CD4-positive, alpha-beta memory T cell (primary cell): ENCODE measurements at regions of chr13 and their contacts with region 1.

Region 1: DNA sequence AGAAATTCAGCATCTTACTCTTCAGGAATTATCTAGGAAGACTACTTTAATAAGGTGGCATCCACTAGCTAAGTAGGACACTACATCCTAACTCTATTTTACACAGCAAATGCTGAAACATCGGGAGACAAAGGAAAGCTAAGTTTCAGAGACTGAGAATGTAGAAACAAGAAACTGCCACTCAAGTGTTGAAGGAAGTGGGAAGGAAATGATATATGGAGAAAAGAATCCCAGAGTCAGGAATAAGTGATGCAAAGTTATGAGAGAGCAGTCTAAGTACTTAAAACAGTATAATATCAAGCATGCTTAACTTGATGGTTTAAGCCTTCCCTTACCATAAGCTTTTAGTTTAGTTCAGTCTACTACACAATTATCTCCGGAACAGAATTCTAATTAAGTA is 52.4 kb downstream of the RBM26 start:
- DNase-seq: no peak
- H3K4me3 ChIP-seq: no peak overlapping the region
- H3K4me3 Mint-ChIP-seq: no peak overlapping the region
- H3K27ac ChIP-seq: no peak overlapping the region
- H3K27ac Mint-ChIP-seq: peak overlapping the region in 2 of 7 donors; percentile 0 to 48
- H3K4me1 ChIP-seq: no peaks in the 10 kb centered on the region
- H3K4me1 Mint-ChIP-seq: peaks cover 5 to 14% (median 11%) of the 10 kb centered on the region in 4 donors
- H3K27me3 ChIP-seq: no peaks in the 10 kb centered on the region
- H3K27me3 Mint-ChIP-seq: no peaks in the 10 kb centered on the region

Region 2: GRCh38 chr13:79314652-79315051 is 39.0 kb before region 1 on chr13:
- CTCF ChIA-PET with region 1: no interaction called
- POLR2A ChIA-PET with region 1: no interaction called
- intact Hi-C with region 1: loop called (anchors 5 kb)
- DNase-seq: no peak
- H3K4me3 ChIP-seq: no peak overlapping the region
- H3K4me3 Mint-ChIP-seq: no peak overlapping the region
- H3K27ac ChIP-seq: no peak overlapping the region
- H3K27ac Mint-ChIP-seq: peak overlapping the region in 2 of 7 donors; percentile 9 to 35
- H3K4me1 ChIP-seq: no peaks in the 10 kb centered on the region
- H3K4me1 Mint-ChIP-seq: no peaks in the 10 kb centered on the region
- H3K27me3 ChIP-seq: no peaks in the 10 kb centered on the region
- H3K27me3 Mint-ChIP-seq: no peaks in the 10 kb centered on the region

Region 3: GRCh38 chr13:79365981-79366380 is 12.3 kb after region 1 on chr13:
- CTCF ChIA-PET with region 1: no interaction called
- POLR2A ChIA-PET with region 1: no interaction called
- intact Hi-C with region 1: loop called (anchors 2 kb)
- DNase-seq: no peak
- H3K4me3 ChIP-seq: no peak overlapping the region
- H3K4me3 Mint-ChIP-seq: no peak overlapping the region
- H3K27ac ChIP-seq: no peak overlapping the region
- H3K27ac Mint-ChIP-seq: peak overlapping the region in 1 of 7 donors; percentile 54
- H3K4me1 ChIP-seq: no peaks in the 10 kb centered on the region
- H3K4me1 Mint-ChIP-seq: peaks cover 8 to 18% (median 14%) of the 10 kb centered on the region in 4 donors
- H3K27me3 ChIP-seq: no peaks in the 10 kb centered on the region
- H3K27me3 Mint-ChIP-seq: no peaks in the 10 kb centered on the region

Region 4: DNA sequence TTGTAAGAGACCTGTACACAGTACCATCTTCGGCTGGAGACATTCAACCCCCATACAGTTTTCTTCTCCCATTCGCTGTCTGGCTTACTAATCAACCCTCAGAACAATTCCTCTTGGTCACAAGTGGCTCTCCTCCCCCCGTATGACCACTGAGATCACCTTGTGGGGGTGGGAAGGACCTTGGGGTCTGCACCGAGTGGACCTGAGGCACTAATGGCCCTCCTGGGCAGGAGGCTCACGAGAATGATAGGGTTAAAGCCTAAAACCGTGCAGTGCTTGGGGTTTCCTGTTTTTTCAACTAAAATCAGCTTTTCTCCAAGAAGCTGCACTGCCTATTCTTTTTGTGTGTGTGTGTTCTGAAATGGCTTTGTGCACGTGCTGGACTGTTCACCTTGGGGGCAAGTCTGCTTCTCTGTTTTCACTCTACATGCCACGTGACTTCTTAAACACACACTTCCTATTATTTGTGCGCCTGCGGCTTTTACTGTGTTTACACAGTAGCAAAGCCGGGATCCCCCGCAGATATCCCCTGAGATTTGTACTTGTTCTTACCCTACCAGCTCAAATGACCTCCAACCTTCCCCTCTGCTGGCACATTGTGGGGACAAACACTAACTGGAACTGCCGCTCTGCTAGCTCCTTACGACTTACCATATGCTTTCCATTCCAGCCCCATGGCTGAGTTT is 40.0 kb after region 1 on chr13:
- CTCF ChIA-PET with region 1: interaction called, 7 read pairs
- POLR2A ChIA-PET with region 1: no interaction called
- intact Hi-C with region 1: loop called (anchors 5 kb)
- DNase-seq: peak; percentile 40 to 61 (median 49)
- H3K4me3 ChIP-seq: peak overlapping the region; percentile 25 to 35
- H3K4me3 Mint-ChIP-seq: peak overlapping the region; percentile 75 to 88 (median 82)
- H3K27ac ChIP-seq: peak overlapping the region; percentile 40
- H3K27ac Mint-ChIP-seq: peak overlapping the region; percentile 87 to 93 (median 90)
- H3K4me1 ChIP-seq: peaks cover 62% of the 10 kb centered on the region
- H3K4me1 Mint-ChIP-seq: peaks cover 44 to 64% (median 56%) of the 10 kb centered on the region in 4 donors
- H3K27me3 ChIP-seq: no peaks in the 10 kb centered on the region
- H3K27me3 Mint-ChIP-seq: no peaks in the 10 kb centered on the region

Region 5: GRCh38 chr13:79423801-79424642 is 70.3 kb after region 1 on chr13:
- CTCF ChIA-PET with region 1: no interaction called
- POLR2A ChIA-PET with region 1: no interaction called
- intact Hi-C with region 1: no loop called
- DNase-seq: peak in 4 of 5 donors; percentile 37 to 44 (median 44)
- H3K4me3 ChIP-seq: no peak overlapping the region
- H3K4me3 Mint-ChIP-seq: no peak overlapping the region
- H3K27ac ChIP-seq: no peak overlapping the region
- H3K27ac Mint-ChIP-seq: no peak overlapping the region
- H3K4me1 ChIP-seq: no peaks in the 10 kb centered on the region
- H3K4me1 Mint-ChIP-seq: peaks cover 0 to 2% (median under 1%) of the 10 kb centered on the region in 4 donors
- H3K27me3 ChIP-seq: no peaks in the 10 kb centered on the region
- H3K27me3 Mint-ChIP-seq: no peaks in the 10 kb centered on the region